ENCODE measurements at regions of chr1 and their contacts with region 1.

Region 1: GRCh38 chr1:100523038-100523652 is 14.8 kb upstream of the GPR88 start:
- DNase-seq: no peak
- H3K4me3 ChIP-seq: no peak overlapping the region
- H3K27ac ChIP-seq: no peak overlapping the region
- H3K4me1 ChIP-seq: no peaks in the 10 kb centered on the region
- H3K27me3 ChIP-seq: peaks cover 2% of the 10 kb centered on the region
- CTCF ChIP-seq: no peak

Region 2: DNA sequence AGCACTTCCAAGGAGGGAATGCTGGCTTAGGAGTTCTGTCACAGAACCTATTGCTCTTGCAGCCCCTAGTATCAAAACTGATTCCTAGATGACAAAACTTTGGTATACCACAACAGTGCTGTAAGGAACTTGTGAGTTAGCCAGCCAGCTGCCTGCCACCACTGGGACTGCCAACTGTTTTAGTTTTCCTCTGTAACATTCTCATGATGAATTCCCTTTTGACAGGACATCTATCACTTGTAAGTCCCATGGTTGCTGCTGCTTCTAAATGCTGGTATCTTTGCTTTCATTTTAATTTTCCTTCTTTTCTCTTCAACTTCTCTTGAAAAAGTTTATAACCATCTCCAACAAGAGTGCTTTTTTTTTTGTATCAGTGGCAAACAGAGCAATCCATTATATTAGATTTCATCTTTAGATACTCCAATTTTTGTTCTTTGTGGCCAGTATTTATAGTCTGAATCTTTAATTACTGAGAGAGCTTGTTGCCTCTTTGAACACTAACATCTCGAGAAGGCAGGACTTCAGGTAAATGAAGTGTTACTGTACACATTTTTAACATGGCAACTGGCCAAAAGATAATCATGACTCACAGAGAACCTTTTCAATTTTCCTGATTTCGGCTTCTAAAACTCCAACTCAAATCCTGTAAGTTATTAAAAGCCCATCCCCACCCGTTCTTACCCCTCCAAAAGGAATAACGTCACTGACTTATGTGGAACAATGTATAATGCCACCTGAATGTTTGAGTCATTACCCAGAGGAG is 293.3 kb before region 1 on chr1:
- CTCF ChIA-PET with region 1: no interaction called
- dilution Hi-C with region 1: no loop called
- in situ Hi-C with region 1: no loop called
- intact Hi-C with region 1: no loop called
- DNase-seq: no peak
- H3K4me3 ChIP-seq: no peak overlapping the region
- H3K27ac ChIP-seq: no peak overlapping the region
- H3K4me1 ChIP-seq: no peaks in the 10 kb centered on the region
- H3K27me3 ChIP-seq: no peaks in the 10 kb centered on the region
- CTCF ChIP-seq: no peak

Region 3: DNA sequence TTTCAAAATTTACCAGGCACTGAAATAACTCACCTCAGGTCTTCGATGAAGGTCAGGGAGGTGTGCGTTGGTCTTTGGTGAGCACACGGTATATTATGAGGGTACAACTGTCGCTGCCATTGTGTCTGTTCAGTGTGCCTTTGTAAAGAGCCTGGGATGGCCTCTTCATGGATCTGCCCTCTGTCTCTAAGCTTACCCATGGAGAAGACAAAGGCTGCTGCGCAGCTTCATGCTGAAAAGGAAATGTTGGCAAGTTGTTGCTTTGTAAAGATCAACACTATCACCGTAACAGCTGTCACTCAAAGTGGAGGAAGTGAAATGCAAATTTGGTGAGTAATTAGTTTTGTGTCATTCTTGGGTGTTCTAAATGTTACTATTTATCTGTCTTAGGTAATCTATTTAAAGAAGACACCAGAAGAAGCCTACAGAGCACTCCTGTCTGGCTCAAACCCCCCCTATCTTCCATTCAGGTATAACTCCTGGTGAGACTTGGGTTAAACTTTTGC is 99.3 kb before region 1 on chr1:
- CTCF ChIA-PET with region 1: no interaction called
- dilution Hi-C with region 1: no loop called
- in situ Hi-C with region 1: no loop called
- intact Hi-C with region 1: no loop called
- DNase-seq: no peak
- H3K4me3 ChIP-seq: no peak overlapping the region
- H3K27ac ChIP-seq: no peak overlapping the region
- H3K4me1 ChIP-seq: no peaks in the 10 kb centered on the region
- H3K27me3 ChIP-seq: no peaks in the 10 kb centered on the region
- CTCF ChIP-seq: no peak

Region 4: GRCh38 chr1:100494393-100495084 is 28.6 kb before region 1 on chr1:
- CTCF ChIA-PET with region 1: no interaction called
- dilution Hi-C with region 1: no loop called
- in situ Hi-C with region 1: no loop called
- intact Hi-C with region 1: loop called (anchors 1 kb)
- DNase-seq: peak; percentile 48
- H3K4me3 ChIP-seq: no peak overlapping the region
- H3K27ac ChIP-seq: no peak overlapping the region
- H3K4me1 ChIP-seq: no peaks in the 10 kb centered on the region
- H3K27me3 ChIP-seq: no peaks in the 10 kb centered on the region
- CTCF ChIP-seq: no peak

Region 5: GRCh38 chr1:100581096-100581705 is 58.1 kb after region 1 on chr1:
- CTCF ChIA-PET with region 1: no interaction called
- dilution Hi-C with region 1: no loop called
- in situ Hi-C with region 1: no loop called
- intact Hi-C with region 1: no loop called
- DNase-seq: no peak
- H3K4me3 ChIP-seq: no peak overlapping the region
- H3K27ac ChIP-seq: no peak overlapping the region
- H3K4me1 ChIP-seq: peaks cover 17% of the 10 kb centered on the region
- H3K27me3 ChIP-seq: no peaks in the 10 kb centered on the region
- CTCF ChIP-seq: no peak

Measured in mammary epithelial cell (primary cell).